Cardiac septum (tissue), 1 donor: ENCODE measurements at regions of chr2 and their contacts with region 1.

Region 1: DNA sequence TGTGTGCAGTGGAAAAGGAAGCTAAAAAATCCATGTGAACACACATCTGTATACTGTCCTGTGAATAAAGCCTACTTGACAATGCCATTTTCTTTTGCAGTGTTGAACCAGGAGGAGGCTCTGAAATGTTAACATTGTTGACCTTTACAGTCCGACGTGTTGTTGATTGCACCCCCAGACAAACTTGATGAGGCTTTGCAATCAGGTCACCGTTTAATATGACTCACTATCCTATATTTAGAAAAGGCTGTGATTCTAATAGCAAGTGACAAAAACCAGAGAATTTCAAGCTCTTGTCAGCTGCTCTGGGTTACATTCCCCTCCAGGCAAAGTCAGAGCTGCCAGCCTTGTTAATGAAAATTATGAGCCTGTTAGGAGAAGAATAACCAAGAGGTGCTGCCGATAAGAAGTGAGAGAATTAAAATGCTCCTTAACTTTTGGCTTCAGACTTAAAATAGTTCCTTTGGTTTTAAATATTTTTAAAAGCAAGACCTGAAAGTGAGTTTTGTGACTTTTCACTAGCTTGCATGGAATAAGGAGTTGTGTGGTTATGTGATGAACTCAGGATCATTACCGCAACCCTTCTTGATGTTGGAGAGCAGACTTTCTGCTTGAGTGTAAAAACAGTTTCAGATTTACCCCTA is 162.1 kb downstream of the QPCT start:
- DNase-seq: no peak

Region 2: DNA sequence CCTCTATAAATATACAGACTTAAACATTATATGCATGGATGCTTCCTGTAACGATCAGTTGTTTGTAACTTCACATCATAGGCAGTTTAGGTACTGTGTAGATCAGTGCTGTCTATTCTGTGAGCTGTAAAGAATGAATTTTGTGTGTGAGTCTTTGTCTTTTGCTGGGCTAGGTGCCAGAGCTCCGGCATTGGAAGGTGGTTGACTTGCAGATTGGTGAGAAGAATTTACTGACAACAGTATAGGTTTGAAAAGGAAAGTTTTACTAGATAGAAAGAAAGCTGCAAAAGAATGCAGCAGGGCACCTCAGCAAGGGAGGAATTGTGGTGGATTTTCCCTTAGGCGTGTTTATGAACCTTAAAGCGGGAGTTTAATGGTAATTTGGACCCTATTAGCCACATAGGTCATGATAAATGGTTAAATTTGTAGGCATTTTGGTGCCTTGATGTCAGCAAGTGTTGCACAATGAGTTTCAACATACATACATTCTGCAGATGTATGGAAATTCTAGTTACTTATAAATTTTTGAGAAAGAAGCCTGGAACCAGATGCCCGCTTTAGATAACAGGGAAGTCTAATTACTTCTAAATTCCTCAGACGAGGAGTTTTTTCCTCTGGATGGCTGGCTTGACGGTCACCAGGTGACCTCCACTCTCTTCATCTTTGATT is 168.8 kb before region 1 on chr2:
- intact Hi-C with region 1: no loop called
- DNase-seq: no peak

Region 3: DNA sequence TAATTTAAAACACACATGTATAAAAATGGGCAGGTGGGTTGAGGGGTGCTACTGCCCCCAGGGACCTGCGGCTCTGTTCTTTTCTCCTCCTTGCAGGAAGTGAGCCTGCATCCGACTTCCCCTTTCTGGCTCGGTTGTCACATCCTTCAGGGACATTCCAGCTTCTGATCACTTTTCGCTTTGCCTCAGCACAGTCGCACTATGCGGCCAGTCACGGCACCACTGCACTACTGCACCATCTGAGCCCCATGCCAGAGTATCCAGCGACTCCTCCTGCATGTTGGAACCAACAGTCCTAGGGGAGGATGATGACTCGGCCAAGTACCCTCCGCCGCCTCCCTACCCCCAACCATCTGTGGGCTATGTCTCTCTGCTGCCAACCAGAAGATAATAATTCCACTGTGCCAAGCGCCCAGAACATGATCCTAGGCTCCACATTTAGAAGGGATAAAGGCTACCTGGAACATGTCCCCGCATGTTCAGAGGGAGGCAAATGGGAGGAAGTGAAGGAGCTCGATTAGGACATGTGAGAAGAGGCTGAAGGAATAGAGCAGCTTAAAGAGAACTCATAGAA is 147.4 kb after region 1 on chr2:
- intact Hi-C with region 1: loop called (anchors 5 kb)
- DNase-seq: peak; percentile 87

Region 4: DNA sequence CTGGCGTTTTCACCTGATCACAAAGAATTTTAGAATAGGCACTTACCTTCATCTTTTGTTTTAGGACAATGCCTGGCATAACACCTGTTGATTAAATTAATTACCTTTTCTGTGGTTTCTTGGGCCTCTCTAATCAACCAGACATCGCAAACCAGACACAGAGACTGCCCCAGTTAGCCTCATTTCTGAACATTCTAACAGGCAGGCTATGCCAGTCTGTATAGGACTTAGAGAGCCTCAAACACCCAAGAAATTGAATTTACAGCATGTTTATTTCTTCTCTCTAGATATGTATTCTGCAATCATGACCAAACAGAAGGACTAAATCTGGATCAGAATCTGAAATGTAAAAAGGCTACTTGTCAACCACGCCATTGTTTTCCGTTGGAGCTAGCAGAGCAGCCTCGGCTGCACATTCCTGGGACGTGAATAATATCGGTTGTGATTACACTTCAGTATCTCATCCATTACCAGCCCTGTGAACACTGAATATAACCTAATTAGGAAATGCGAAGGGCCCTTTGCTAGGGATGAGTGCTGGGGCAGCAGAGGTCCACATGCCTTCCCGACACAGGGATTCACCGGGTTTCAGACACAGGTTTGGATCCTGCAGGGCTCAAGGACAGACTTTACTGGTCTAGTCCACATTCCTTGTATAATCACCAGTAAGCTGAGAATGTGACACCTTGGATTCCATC is 182.4 kb after region 1 on chr2:
- intact Hi-C with region 1: no loop called
- DNase-seq: no peak

Region 5: GRCh38 chr2:37832590-37833197 is 326.2 kb after region 1 on chr2:
- intact Hi-C with region 1: loop called (anchors 2 kb)
- DNase-seq: peak; percentile 91

Region 6: GRCh38 chr2:38702413-38702812 is 1195.9 kb after region 1 on chr2:
- intact Hi-C with region 1: no loop called
- DNase-seq: no peak